PC-9 (cell line): ENCODE measurements at regions of chr10 and their contacts with region 1.

Region 1: DNA sequence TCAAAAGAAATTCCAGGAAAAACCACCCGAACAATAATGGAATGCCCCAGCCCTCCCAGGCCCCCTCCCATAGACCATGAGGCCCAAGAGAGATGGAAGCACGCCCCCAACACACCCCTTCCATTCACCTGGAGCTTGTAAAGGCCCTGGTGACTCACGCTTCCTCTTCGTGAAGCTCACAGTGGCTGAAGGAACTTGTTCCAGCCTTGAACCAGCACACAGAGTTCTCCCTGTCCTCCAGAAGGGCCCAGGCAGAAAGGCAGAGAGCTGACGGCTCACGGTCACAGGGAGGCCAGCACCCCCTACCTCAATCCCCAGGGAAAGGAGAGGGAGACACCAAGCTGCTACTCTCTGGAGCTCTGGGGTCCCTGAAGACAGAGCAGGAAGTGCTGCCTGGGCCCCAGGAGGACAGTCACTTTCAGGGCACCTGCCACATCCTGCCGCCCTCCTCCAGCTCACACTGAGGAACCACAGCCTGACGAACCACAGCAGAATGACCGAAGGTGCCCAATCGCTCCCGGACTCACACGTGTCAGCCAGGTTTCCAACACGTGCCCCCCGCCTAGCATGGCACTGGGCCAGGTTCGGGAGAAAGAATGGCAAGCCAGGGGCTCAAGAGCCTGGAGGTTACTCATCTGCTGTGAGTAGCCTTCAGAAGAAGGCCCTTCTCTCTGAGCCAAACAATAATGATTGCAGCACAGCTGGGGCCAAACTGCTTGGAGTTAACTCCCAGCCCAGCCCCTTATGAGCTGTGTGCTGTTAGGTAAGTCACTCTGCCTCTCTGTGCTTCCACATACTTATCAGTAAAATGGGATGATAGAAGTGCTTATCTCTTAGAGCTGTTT is 52.8 kb downstream of the DLG5 start:
- DNase-seq: peak; percentile 92 to 93
- H3K4me3 ChIP-seq: peak overlapping the region; percentile 2; the same call in 1 of the 2 replicates
- H3K27ac ChIP-seq: peak overlapping the region; percentile 89
- H3K4me1 ChIP-seq: peaks cover 35% of the 10 kb centered on the region
- H3K27me3 ChIP-seq: no peaks in the 10 kb centered on the region
- CTCF ChIP-seq: no peak

Region 2: GRCh38 chr10:77548151-77548550 is 325.6 kb before region 1 on chr10:
- CTCF ChIA-PET with region 1: no interaction called
- POLR2A ChIA-PET with region 1: no interaction called
- intact Hi-C with region 1: no loop called
- DNase-seq: peak; percentile 43 to 50
- H3K4me3 ChIP-seq: no peak overlapping the region
- H3K27ac ChIP-seq: no peak overlapping the region
- H3K4me1 ChIP-seq: 0 out of 2 replicates have a peak, but pooled peaks cover 8% of the 10 kb centered on the region
- H3K27me3 ChIP-seq: no peaks in the 10 kb centered on the region
- CTCF ChIP-seq: no peak

Region 3: DNA sequence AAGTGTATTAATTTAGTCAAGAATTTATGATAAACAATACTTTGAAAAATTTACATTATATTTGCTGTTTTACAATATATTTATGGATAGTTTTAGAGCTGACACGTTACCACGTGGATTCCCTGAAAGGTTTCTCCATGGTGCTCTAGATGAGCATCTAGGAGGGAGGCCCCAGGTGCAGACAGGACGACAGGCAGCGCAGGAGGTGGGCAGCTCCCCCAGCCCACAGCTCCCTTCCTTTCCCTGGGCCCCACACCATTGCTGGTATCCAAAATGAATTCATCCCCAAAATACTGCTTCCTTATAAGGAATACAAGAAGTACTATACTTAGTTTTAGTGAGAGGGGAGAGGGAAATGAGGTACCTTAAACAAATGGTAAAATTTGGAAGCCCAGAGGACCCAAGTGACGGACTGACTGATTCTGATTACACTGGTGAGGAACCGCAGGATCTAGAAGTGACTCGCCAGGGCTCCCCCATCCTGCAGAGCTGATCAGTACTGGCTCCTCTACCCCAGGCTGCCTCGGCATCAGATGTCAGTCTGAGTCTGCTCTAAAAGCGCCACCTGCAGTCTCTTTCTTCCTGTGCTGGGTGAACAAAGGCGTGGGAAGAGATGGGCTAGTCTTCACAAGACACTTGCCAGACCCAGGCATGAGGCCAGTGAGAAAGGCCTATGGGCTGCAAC is 36.4 kb before region 1 on chr10:
- CTCF ChIA-PET with region 1: no interaction called
- POLR2A ChIA-PET with region 1: no interaction called
- intact Hi-C with region 1: no loop called
- DNase-seq: no peak
- H3K4me3 ChIP-seq: no peak overlapping the region
- H3K27ac ChIP-seq: no peak overlapping the region
- H3K4me1 ChIP-seq: no peaks in the 10 kb centered on the region
- H3K27me3 ChIP-seq: no peaks in the 10 kb centered on the region
- CTCF ChIP-seq: no peak

Region 4: DNA sequence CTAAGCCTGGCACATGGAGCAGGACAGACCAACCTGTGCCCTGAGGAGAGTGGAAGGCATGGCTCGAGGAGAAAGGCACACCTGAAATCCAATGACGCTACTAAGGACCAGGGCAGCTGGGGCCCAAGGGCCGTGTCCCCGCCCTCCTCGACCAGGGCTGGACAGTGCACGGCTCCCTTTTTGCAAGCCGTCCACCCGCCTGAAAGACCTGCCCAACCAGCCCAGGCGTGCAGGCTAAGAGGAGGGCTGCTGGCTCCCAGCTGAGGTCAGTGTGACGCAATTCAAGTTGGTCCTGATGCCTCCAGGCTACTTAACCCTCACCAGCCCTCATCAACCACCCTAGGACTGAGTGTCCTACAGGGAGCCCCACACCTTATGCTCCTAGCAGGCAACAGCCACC is 16.5 kb before region 1 on chr10:
- CTCF ChIA-PET with region 1: interaction called, 10 read pairs
- POLR2A ChIA-PET with region 1: interaction called, 3 read pairs
- intact Hi-C with region 1: no loop called
- DNase-seq: peak; percentile 92
- H3K4me3 ChIP-seq: no peak overlapping the region
- H3K27ac ChIP-seq: no peak overlapping the region
- H3K4me1 ChIP-seq: peaks cover 62% of the 10 kb centered on the region
- H3K27me3 ChIP-seq: no peaks in the 10 kb centered on the region
- CTCF ChIP-seq: no peak

Region 5: GRCh38 chr10:77863446-77863845 is 10.3 kb before region 1 on chr10:
- CTCF ChIA-PET with region 1: interaction called, 11 read pairs
- POLR2A ChIA-PET with region 1: interaction called, 4 read pairs
- intact Hi-C with region 1: no loop called
- DNase-seq: no peak
- H3K4me3 ChIP-seq: no peak overlapping the region
- H3K27ac ChIP-seq: no peak overlapping the region
- H3K4me1 ChIP-seq: peaks cover 27% of the 10 kb centered on the region
- H3K27me3 ChIP-seq: no peaks in the 10 kb centered on the region
- CTCF ChIP-seq: no peak

Region 6: GRCh38 chr10:78015546-78015945 is 141.8 kb after region 1 on chr10:
- CTCF ChIA-PET with region 1: no interaction called
- POLR2A ChIA-PET with region 1: no interaction called
- intact Hi-C with region 1: no loop called
- DNase-seq: no peak
- H3K4me3 ChIP-seq: no peak overlapping the region
- H3K27ac ChIP-seq: no peak overlapping the region
- H3K4me1 ChIP-seq: no peaks in the 10 kb centered on the region
- H3K27me3 ChIP-seq: no peaks in the 10 kb centered on the region
- CTCF ChIP-seq: no peak